ENCODE measurements at regions of chr9 and their contacts with region 1.

Region 1: DNA sequence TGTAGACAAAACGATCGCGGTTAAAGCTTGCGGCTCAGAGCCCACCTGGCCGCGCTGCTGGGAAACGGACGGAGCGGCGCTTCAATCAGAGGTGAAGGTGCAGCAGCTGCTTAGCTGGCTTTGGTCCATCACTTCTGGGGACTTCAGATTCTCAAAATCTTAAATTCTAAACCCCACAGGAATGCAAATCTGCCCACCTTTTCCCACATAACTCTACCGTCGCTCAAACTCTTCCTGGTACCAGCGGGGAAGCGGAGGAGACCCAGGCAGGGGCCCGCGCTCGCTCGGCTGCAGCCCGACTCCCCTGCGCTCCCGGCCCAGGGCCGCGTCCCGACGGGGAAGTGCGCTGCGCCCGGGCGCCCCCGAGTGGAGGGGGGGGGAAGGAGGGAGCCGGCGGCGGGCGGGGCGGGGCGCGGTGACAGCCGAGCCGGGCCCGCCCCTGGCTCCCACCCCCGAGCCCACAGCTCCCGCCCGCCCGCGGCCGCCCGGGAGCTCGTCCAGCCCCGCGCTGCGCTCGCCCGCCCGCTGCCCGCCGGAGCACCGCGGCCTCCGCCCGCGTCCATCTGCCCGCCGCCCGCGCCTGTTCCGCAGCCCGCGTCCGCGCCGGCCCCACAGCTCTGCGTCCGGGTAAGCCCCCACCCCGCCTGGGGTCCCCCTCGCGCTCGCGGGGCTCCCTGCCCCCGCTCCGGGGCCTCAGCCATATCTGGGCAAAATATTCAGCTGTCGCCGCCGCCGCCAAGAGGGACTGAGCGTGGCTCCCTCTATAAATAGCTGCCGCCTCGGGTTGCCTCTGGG is at the start of gene TMOD1:
- DNase-seq: peak; percentile 78 to 90 (median 81)
- ATAC-seq: peak; percentile 52 to 84 (median 68)
- H3K4me3 ChIP-seq: peak within 1 kb of the TSS; percentile 62 to 96 (median 88)
- H3K27ac ChIP-seq: peak within 1 kb of the TSS; percentile 81 to 98 (median 93)
- H3K4me1 ChIP-seq: peaks cover 0 to 55% (median 26%) of the 10 kb centered on the region in 12 donors
- H3K27me3 ChIP-seq: peaks cover 0 to 43% (median 0%) of the 10 kb centered on the region in 9 donors
- CTCF ChIP-seq: peak in 8 of 12 donors; percentile 18 to 46 (median 29)
- POLR2A ChIP-seq: no peak
- total RNA-seq, gene TMOD1: 106 to 201 (median 176) TPM

Region 2: DNA sequence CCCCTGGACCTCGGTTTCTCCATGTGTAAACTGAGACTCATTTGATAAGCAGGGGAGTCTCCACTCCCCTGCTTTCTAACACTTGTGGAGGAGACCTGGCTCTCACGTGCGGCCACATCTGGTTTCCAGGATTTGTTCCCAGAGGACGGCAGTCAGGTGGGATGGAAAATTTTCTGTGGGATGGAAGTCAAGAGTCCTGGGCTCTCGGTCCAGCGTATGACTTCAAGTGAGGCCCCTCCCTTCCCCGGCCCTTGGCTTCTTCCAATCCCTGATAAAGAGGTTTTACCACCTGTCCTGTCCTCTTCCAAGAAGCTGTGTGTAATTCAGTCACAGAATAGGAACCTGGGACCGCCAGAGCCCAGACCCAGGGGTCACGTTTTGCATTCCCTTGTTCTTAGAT is 35.1 kb after region 1 on chr9:
- intact Hi-C with region 1: loop called in 2 of 10 experiments (anchors 5 kb)
- DNase-seq: no peak
- ATAC-seq: peak in 3 of 4 donors; percentile 12 to 35 (median 21)
- H3K4me3 ChIP-seq: no peak overlapping the region
- H3K27ac ChIP-seq: peak overlapping the region in 11 of 12 donors; percentile 31 to 80 (median 43)
- H3K4me1 ChIP-seq: peaks cover 0 to 53% (median 23%) of the 10 kb centered on the region in 12 donors
- H3K27me3 ChIP-seq: no peaks in the 10 kb centered on the region
- CTCF ChIP-seq: no peak
- POLR2A ChIP-seq: no peak

Region 3: GRCh38 chr9:97559111-97559514 is 57.7 kb after region 1 on chr9:
- intact Hi-C with region 1: loop called in 6 of 10 experiments (anchors 5 to 10 kb)
- DNase-seq: no peak
- ATAC-seq: no peak
- H3K4me3 ChIP-seq: no peak overlapping the region
- H3K27ac ChIP-seq: peak overlapping the region; percentile 77 to 96 (median 86)
- H3K4me1 ChIP-seq: peaks cover 3 to 86% (median 59%) of the 10 kb centered on the region in 12 donors
- H3K27me3 ChIP-seq: no peaks in the 10 kb centered on the region
- CTCF ChIP-seq: no peak
- POLR2A ChIP-seq: no peak

Region 4: GRCh38 chr9:97564291-97565175 is 63.2 kb after region 1 on chr9:
- intact Hi-C with region 1: loop called in 6 of 10 experiments (anchors 5 to 10 kb)
- DNase-seq: peak in 1 of 5 donors; percentile 38
- ATAC-seq: peak; percentile 45 to 72 (median 62)
- H3K4me3 ChIP-seq: no peak overlapping the region
- H3K27ac ChIP-seq: peak overlapping the region; percentile 0 to 73 (median 46)
- H3K4me1 ChIP-seq: peaks cover 4 to 54% (median 21%) of the 10 kb centered on the region in 12 donors
- H3K27me3 ChIP-seq: no peaks in the 10 kb centered on the region
- CTCF ChIP-seq: peak in 1 of 12 donors; percentile 11
- POLR2A ChIP-seq: no peak

Measured in heart left ventricle (tissue), 16 donors.